Activated CD4-positive, alpha-beta memory T cell treated with anti-CD3 and anti-CD28 coated beads for 36 hours (primary cell): ENCODE measurements at regions of chr1 and their contacts with region 1.

Region 1: DNA sequence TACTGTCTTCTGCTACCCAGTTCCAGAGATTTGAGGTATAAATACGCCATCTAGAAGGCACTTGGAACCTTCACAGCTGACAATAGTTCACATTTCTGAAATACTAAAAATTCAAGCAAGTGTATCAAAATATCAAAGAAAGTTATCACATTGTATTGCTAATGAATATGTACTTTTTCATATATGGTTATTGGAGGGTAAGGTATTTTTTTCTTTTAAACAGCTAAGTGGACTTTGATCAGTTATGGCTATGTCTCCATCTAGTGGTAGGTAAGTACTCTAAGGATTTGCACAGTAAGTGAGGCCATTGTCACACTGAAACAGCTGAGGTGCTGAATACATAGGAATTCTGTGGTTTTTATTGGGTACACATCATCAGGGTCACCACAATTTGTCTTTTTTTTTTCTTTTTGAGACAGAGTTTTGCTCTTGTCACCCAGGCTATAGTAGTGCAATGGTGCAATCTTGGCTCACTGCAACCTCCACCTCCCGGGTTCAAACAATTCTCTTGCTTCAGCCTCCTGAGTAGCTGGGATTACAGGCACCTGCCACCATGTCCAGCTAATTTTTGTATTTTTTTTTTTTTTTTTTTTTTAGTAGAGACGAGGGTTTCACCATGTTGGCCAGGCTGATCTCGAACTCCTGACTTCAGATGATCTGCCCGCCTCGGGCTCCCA is 49.1 kb upstream of the CR2 start:
- DNase-seq: no peak
- H3K4me3 Mint-ChIP-seq: no peak overlapping the region
- H3K27ac Mint-ChIP-seq: no peak overlapping the region
- H3K4me1 Mint-ChIP-seq: peaks cover 13% of the 10 kb centered on the region
- H3K27me3 Mint-ChIP-seq: peaks cover 5% of the 10 kb centered on the region

Region 2: DNA sequence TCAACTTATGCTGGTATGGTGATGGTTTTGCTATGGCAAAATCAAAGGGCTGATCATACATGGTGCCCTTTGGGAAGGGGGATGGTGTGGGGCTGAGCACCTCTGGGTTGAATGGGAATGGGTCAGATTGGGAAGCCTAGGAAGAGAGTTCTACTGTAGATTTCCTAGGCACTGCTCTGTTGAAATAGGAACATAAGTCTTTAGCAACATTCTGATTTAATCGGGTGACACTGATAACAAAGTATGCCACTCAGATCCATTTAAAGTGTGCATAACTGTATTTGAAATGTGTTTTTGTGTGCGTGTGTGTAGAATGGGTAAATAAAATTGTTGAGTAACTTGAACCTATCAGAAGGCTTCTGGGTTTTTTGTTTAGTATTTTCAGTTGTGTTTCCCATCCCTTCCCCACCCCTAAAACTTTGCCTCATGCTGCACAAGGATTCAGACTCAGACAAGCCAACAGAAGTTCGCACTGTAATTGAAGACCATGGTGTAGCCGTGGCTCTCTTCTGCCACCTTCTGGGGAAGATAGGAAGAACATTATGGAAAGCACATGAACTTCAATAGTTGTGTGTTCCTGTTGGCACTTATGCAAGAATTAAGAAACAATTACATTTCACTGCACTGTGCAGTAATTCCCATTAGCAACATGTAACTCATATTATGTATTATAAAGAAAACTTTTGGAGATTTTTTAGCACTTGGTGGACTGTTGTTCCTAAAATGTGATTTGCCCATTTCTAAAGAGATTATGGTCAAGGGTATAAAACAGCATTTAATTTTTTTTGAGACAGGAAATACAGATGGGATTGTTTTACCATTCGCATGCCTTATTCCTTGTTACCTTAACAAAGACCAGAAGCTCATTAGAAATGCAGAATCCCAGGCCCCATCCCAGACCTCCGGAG is 327.3 kb before region 1 on chr1:
- CTCF ChIA-PET with region 1: interaction called, 62 read pairs
- POLR2A ChIA-PET with region 1: no interaction called
- intact Hi-C with region 1: no loop called
- DNase-seq: peak; percentile 70
- H3K4me3 Mint-ChIP-seq: no peak overlapping the region
- H3K27ac Mint-ChIP-seq: no peak overlapping the region
- H3K4me1 Mint-ChIP-seq: peaks cover 2% of the 10 kb centered on the region
- H3K27me3 Mint-ChIP-seq: peaks cover 16% of the 10 kb centered on the region

Region 3: DNA sequence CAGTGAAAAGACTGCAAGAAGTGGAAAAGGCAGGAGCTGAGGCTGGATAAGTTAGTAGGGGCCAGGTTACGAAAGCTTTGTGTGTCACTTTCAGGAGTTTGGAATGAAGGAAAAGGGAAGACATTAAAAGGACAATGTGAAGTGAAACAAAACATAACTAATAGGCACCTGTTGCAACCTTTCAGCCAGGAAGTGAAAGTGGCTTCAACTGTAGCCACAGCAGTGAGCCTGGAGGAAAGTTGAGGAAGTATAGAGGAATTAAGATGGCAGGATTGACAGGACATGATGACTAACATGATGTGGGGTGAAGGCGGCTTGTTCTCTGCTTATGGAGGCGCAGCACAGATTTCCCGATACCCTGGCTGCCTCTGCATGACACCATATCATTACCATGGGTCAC is 232.1 kb before region 1 on chr1:
- CTCF ChIA-PET with region 1: interaction called, 3 read pairs
- POLR2A ChIA-PET with region 1: no interaction called
- intact Hi-C with region 1: loop called (anchors 5 kb)
- DNase-seq: no peak
- H3K4me3 Mint-ChIP-seq: no peak overlapping the region
- H3K27ac Mint-ChIP-seq: no peak overlapping the region
- H3K4me1 Mint-ChIP-seq: no peaks in the 10 kb centered on the region
- H3K27me3 Mint-ChIP-seq: no peaks in the 10 kb centered on the region

Region 4: DNA sequence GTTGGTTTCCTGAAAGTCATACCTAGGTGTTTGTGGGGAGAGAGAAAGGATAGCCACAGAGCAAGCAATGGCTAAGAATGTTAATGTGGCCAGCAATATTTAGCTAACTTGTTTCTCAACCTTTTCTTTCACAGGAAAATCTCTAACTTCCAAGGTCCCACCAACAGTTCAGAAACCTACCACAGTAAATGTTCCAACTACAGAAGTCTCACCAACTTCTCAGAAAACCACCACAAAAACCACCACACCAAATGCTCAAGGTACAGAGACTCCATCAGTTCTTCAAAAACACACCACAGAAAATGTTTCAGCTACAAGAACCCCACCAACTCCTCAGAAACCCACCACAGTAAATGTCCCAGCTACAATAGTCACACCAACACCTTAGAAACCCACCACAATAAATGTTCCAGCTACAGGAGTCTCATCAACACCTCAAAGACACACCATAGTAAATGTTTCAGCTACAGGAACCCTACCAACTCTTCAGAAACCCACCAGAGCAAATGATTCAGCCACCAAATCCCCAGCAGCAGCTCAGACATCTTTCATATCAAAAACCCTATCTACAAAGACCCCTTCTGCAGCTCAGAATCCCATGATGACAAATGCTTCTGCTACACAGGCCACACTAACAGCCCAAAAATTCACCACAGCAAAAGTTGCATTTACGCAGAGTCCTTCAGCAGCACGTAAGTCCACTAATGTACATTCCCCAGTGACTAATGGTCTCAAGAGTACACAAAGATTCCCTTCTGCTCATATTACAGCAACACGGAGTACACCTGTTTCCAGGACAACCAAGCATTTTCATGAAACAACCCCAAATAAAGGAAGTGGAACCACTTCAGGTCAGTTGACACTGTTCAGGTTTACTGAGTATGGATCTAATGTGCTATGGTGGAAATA is 68.2 kb before region 1 on chr1:
- CTCF ChIA-PET with region 1: interaction called, 6 read pairs
- POLR2A ChIA-PET with region 1: interaction called, 4 read pairs
- intact Hi-C with region 1: loop called (anchors 2 kb)
- DNase-seq: peak; percentile 39
- H3K4me3 Mint-ChIP-seq: no peak overlapping the region
- H3K27ac Mint-ChIP-seq: peak overlapping the region; percentile 86
- H3K4me1 Mint-ChIP-seq: peaks cover 58% of the 10 kb centered on the region
- H3K27me3 Mint-ChIP-seq: no peaks in the 10 kb centered on the region

Region 5: GRCh38 chr1:207444514-207445217 is 39.7 kb after region 1 on chr1:
- CTCF ChIA-PET with region 1: no interaction called
- POLR2A ChIA-PET with region 1: no interaction called
- intact Hi-C with region 1: no loop called
- DNase-seq: no peak
- H3K4me3 Mint-ChIP-seq: no peak overlapping the region
- H3K27ac Mint-ChIP-seq: no peak overlapping the region
- H3K4me1 Mint-ChIP-seq: peaks cover 4% of the 10 kb centered on the region
- H3K27me3 Mint-ChIP-seq: peaks cover 7% of the 10 kb centered on the region

Region 6: GRCh38 chr1:207787776-207788175 is 382.8 kb after region 1 on chr1:
- CTCF ChIA-PET with region 1: no interaction called
- POLR2A ChIA-PET with region 1: no interaction called
- intact Hi-C with region 1: no loop called
- DNase-seq: no peak
- H3K4me3 Mint-ChIP-seq: no peak overlapping the region
- H3K27ac Mint-ChIP-seq: no peak overlapping the region
- H3K4me1 Mint-ChIP-seq: no peaks in the 10 kb centered on the region
- H3K27me3 Mint-ChIP-seq: no peaks in the 10 kb centered on the region